ENCODE measurements at regions of chr5 and their contacts with region 1.

Region 1: GRCh38 chr5:128213340-128213739 is 129.8 kb downstream of the SLC12A2 start:
- DNase-seq: peak; percentile 48 to 79 (median 56)
- H3K4me3 ChIP-seq: no peak overlapping the region
- H3K27ac ChIP-seq: no peak overlapping the region
- H3K4me1 ChIP-seq: no peaks in the 10 kb centered on the region
- H3K27me3 ChIP-seq: no peaks in the 10 kb centered on the region
- CTCF ChIP-seq: peak; percentile 56 to 85 (median 73)
- POLR2A ChIP-seq: no peak

Region 2: DNA sequence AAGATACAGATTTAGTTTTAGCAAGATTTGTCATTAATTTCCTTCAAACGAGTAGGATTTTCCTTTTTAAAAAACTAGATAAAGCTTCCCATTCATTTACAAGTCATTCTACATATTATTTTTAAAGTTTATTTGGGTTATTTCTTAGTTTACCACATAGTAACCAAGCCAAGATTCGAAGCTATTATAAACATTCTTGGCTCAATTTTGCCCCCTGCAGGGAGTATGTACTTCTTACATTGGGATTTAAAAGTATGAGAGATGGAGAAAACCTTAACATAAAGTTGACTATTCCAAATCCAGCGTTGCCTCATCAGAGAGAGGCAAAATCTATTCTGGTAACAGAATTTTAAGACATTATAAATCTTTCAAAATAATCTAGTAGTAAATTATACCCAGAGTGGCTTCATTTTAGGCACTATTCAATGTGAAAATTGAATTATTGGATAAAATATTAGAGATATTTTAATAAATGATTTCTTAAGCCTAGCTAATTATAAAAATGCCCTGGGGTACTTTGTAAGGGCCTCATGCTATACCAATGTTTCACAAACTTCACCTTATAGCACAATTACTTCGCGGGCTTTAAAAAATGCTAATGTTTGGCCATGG is 285.6 kb after region 1 on chr5:
- intact Hi-C with region 1: loop called in 1 of 2 experiments (anchors 5 kb)
- DNase-seq: peak in 2 of 7 donors; percentile 15 to 17
- H3K4me3 ChIP-seq: no peak overlapping the region
- H3K27ac ChIP-seq: no peak overlapping the region
- H3K4me1 ChIP-seq: no peaks in the 10 kb centered on the region
- H3K27me3 ChIP-seq: no peaks in the 10 kb centered on the region
- CTCF ChIP-seq: peak; percentile 7 to 50 (median 44)
- POLR2A ChIP-seq: no peak

Region 3: DNA sequence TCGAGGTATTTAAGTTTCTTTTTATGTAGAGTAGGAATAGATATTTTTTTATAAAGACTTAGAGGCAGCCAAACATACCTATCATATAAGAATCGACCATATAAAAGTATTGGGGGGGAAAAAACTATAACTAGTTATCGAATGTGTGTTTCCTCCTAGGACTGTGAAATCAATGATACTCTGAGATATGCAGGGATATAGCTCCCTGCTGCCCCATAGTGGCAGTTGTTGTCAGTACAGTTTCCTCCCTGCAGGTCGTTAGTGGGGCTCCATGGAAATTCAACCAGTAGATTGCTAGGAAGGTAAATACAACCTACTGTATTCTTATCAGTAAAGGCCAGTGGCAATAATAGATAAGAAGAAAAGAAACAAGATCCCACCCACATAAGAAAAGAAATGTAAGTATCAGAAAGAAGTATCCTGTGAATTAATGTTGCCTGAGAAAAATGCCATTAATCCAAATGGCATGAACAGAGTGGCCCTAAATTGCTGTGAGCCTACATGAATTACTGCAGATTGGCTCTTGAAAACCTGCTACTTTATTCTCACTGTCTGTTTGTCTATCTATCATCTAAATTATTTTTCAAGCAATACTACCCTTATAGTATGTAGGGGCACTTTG is 461.6 kb after region 1 on chr5:
- intact Hi-C with region 1: loop called (anchors 5 to 10 kb)
- DNase-seq: peak; percentile 46 to 76 (median 61)
- H3K4me3 ChIP-seq: no peak overlapping the region
- H3K27ac ChIP-seq: no peak overlapping the region
- H3K4me1 ChIP-seq: no peaks in the 10 kb centered on the region
- H3K27me3 ChIP-seq: no peaks in the 10 kb centered on the region
- CTCF ChIP-seq: peak; percentile 54 to 74 (median 64)
- POLR2A ChIP-seq: no peak

Region 4: DNA sequence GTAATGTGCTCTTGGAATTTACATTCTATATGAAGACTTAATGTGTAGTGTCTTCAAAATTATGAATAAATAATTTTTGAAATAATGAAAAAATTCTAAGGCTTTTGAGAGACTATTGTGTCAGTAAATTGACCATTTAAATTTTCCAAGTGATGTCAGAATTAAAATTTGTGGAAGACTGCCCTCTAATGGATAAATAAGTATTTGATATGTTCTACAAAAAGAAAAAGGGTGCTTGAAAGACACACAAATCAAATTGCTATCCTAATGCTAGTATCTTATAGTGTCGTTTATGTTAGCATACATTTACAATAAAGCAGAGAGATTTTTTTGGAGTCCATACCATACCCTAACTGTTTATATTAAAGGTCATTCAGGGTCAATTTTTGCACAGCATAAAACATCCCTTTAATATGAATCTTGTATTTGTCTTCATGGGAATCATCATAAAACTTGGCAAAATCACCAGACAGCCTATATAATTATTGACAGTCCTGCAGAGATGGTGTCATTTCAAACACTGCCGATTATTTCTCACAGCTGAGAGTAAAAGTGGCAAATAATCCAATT is 631.1 kb after region 1 on chr5:
- intact Hi-C with region 1: loop called in 1 of 2 experiments (anchors 5 kb)
- DNase-seq: no peak
- H3K4me3 ChIP-seq: no peak overlapping the region
- H3K27ac ChIP-seq: no peak overlapping the region
- H3K4me1 ChIP-seq: no peaks in the 10 kb centered on the region
- H3K27me3 ChIP-seq: no peaks in the 10 kb centered on the region
- CTCF ChIP-seq: peak in 5 of 6 experiments; percentile 21 to 47 (median 37)
- POLR2A ChIP-seq: no peak

Region 5: GRCh38 chr5:130055572-130055971 is 1842.2 kb after region 1 on chr5:
- intact Hi-C with region 1: no loop called
- DNase-seq: no peak
- H3K4me3 ChIP-seq: no peak overlapping the region
- H3K27ac ChIP-seq: no peak overlapping the region
- H3K4me1 ChIP-seq: no peaks in the 10 kb centered on the region
- H3K27me3 ChIP-seq: no peaks in the 10 kb centered on the region
- CTCF ChIP-seq: no peak
- POLR2A ChIP-seq: no peak

Measured in adrenal gland (tissue), 19 donors.